HEK293T (cell line): ENCODE measurements at regions of chr18 and their contacts with region 1.

Region 1: DNA sequence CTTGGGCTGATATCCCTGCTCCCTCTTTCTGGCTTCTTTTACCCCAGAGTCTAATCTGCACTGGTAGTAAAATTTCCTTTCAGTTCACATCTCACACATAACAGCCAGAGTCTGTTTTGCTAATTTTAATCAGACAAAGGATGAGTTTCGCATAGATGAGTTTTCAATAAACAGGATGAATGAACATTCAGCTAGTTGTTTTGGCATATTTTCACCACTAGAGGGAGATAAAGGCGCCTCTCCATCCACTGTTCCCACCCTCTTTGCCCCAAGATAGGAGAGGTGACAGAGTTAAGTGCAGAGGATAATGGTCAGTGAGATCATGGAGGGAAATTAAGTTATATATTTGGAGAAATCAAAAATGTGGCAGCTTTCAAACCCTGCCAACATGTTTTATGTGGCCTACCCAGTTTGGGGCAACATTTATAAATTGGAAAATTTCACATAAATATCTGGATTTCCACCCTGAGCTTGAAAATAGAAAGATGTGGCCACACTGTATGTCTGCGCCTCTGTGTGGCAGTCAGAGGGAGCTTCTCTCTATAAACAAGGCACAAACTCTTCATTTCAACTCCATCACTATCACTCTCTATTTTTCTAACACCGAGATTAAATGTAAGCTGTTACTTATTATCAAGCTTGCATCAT is 48.5 kb upstream of the DTNA start:
- DNase-seq: peak; percentile 86

Region 2: GRCh38 chr18:34258176-34258575 is 403.4 kb before region 1 on chr18:
- CTCF ChIA-PET with region 1: no interaction called
- POLR2A ChIA-PET with region 1: no interaction called
- DNase-seq: no peak

Region 3: DNA sequence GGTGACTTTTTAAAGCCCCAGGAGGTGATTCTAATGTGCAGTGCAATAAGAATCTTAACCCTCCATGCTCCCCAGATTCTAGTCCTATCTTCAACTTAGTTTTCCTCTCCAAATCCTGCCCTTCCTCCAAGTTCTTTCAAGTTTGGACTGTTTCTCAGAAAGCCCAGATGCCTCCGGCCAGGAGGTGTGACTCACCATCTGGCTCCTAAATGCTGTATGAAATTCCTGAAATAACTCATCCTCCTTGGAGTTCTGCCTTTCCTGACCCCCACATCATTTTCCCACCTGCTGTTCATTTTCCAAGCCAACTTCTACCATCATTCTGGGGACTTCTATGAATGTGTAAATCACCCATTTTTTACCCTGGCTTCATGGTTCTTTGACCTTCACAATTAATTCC is 318.6 kb before region 1 on chr18:
- CTCF ChIA-PET with region 1: no interaction called
- POLR2A ChIA-PET with region 1: no interaction called
- DNase-seq: no peak

Region 4: DNA sequence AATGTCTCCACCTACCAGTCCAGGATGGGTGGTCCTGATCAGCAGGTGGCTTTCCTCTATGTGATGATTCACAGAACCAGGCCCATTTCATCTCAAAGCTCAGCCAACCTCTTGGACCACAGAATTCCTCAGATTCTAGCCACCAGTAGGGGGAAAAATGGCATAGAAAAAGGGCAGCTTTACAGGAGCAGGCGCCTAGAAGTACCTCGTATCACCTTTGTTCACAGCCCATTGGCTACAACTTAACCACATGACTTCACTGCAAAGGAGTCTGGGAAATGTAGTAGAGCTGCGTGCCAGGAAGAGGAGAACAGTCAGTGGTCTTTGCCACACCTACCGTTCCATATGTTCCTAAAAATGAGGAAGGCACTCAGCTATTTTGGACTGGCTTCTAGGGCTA is 14.3 kb before region 1 on chr18:
- CTCF ChIA-PET with region 1: interaction called, 49 read pairs
- POLR2A ChIA-PET with region 1: no interaction called
- DNase-seq: peak; percentile 75

Region 5: DNA sequence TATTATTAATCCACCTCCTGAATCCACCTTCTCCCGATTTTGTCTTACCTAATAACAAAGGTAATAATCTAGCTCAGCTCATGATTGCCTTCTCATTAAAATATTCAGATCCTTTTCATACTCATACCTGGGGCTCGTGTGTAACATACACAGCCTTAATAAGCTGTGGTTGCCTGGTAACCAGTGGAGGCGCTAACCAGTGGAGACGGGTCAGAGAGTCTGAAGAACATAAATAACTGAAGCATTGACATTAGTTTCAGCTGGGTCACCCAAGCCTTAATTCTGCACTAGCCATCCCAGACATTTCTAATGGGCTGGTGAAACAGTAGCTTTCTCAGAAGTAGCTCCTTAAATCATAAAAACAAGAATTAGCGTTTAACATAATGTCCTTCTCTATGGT is 33.7 kb after region 1 on chr18:
- CTCF ChIA-PET with region 1: interaction called, 30 read pairs
- POLR2A ChIA-PET with region 1: interaction called, 3 read pairs
- DNase-seq: peak; percentile 52

Region 6: DNA sequence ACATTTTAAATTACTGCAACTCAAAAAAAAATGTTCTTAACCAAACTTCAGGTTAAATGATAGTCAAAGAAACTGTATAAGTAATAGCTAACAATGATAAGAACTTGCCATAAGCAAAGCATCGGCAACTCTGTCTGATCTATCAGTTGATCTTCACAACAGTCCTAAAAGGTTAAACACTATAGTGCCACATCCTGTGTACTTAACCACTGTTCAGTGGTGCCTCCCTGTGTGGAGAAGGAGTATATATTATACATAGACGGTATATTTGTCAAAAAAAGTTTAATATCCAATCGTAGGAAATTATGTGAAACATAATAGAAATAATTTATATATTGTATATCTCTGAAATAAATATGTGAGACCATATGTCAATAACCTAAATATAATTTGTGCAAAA is 61.6 kb after region 1 on chr18:
- CTCF ChIA-PET with region 1: interaction called, 19 read pairs
- POLR2A ChIA-PET with region 1: interaction called, 4 read pairs
- DNase-seq: no peak

Region 7: GRCh38 chr18:34787931-34788532 is 126.4 kb after region 1 on chr18:
- CTCF ChIA-PET with region 1: interaction called, 37 read pairs
- POLR2A ChIA-PET with region 1: no interaction called
- DNase-seq: peak; percentile 74